ENCODE measurements at regions of chr12 and their contacts with region 1.

Region 1: DNA sequence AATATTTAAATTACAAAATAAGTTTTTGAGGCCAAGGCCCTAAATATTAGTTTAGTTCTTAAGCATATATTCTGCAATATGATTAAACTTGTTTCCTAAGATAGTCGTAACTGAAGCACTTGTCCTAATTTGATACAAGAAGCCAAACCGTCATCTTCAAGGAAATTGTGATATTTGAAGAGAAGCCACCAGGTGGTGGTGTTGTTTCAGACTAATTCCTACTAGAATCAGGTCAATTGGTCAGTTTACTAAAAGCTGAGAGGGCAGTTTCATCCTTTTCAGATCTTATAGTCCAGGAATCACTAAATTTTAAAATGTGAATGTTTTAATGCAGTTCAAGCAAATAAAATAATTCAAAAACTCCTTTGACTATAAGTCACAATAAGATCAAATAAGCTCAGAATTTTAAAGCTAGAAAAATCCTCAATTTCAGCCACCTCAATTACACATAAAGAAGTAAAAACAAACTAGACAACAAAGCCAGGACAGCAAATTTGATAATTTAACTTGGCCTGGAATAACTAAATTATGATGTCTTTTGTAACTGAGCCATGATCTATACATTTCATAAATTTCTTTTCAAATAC is 7.1 kb upstream of the ARL1 start:
- DNase-seq: peak; percentile 88
- ATAC-seq: peak; percentile 73
- H3K4me3 ChIP-seq: no peak overlapping the region
- H3K27ac ChIP-seq: no peak overlapping the region
- H3K4me1 ChIP-seq: peaks cover 4% of the 10 kb centered on the region; the same call in 1 of the 2 replicates
- H3K27me3 ChIP-seq: no peaks in the 10 kb centered on the region
- CTCF ChIP-seq: peak; percentile 88

Region 2: GRCh38 chr12:101570047-101570446 is 155.4 kb after region 1 on chr12:
- CTCF ChIA-PET with region 1: no interaction called
- POLR2A ChIA-PET with region 1: no interaction called
- intact Hi-C with region 1: loop called (anchors 1 kb)
- DNase-seq: peak; percentile 59
- ATAC-seq: peak; percentile 70
- H3K4me3 ChIP-seq: no peak overlapping the region
- H3K27ac ChIP-seq: no peak overlapping the region
- H3K4me1 ChIP-seq: no peaks in the 10 kb centered on the region
- H3K27me3 ChIP-seq: peaks cover 66% of the 10 kb centered on the region
- CTCF ChIP-seq: peak; percentile 69

Region 3: DNA sequence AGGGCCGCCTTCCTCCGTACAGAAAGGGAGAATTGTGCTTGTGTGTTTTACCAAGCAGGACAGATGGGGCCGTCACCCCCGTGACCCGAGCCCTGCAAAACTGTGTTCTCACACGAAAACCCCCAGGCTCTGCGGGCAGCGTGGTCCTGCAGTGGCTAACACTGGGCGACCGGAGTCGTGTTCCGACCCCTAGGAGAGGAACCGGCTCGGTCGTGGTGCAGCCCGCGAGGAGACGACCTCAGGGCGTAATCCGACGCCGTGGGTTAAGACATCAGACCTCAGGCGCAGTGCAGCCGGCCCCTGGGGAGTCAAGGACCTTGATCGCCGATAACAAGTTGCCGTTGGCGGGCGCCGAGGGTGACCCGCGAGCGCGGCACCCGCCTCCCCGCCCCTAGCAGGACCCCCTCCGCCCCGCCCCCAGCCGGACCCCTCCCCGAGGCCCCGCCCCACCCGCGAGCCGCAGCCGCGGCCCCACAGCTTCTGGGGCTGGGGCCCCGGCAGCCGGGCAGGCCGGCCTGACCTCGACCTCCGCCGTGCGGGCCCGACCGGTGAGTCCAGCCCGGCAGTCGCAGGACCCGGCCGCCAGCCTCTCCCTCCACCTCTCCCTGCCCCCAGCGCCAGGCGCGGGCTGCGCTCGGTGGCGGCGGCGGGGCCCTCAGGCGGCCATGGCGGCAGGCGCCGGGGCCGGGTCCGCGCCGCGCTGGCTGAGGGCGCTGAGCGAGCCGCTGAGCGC is 282.7 kb after region 1 on chr12 and contains the start of gene CHPT1:
- CTCF ChIA-PET with region 1: no interaction called
- POLR2A ChIA-PET with region 1: no interaction called
- intact Hi-C with region 1: loop called (anchors 2 kb)
- DNase-seq: peak; percentile 47
- ATAC-seq: peak; percentile 70
- H3K4me3 ChIP-seq: peak within 1 kb of the TSS; percentile 89
- H3K27ac ChIP-seq: no peak within 1 kb of the TSS
- H3K4me1 ChIP-seq: peaks cover 12% of the 10 kb centered on the region
- H3K27me3 ChIP-seq: no peaks in the 10 kb centered on the region
- CTCF ChIP-seq: no peak
- total RNA-seq, gene CHPT1: 55.3 and 56.2 TPM in 2 replicates

Region 4: GRCh38 chr12:101773650-101774162 is 359.1 kb after region 1 on chr12:
- CTCF ChIA-PET with region 1: no interaction called
- POLR2A ChIA-PET with region 1: no interaction called
- intact Hi-C with region 1: loop called (anchors 5 kb)
- DNase-seq: peak; percentile 81
- ATAC-seq: peak; percentile 84
- H3K4me3 ChIP-seq: no peak overlapping the region
- H3K27ac ChIP-seq: no peak overlapping the region
- H3K4me1 ChIP-seq: no peaks in the 10 kb centered on the region
- H3K27me3 ChIP-seq: no peaks in the 10 kb centered on the region
- CTCF ChIP-seq: peak; percentile 95

Region 5: GRCh38 chr12:101839324-101840283 is 425.0 kb after region 1 on chr12:
- CTCF ChIA-PET with region 1: no interaction called
- POLR2A ChIA-PET with region 1: no interaction called
- intact Hi-C with region 1: loop called (anchors 1 kb)
- DNase-seq: peak; percentile 85
- ATAC-seq: peak; percentile 90
- H3K4me3 ChIP-seq: peak overlapping the region; percentile 24; the same call in 1 of the 2 replicates
- H3K27ac ChIP-seq: no peak overlapping the region
- H3K4me1 ChIP-seq: peaks cover 8% of the 10 kb centered on the region; the same call in 1 of the 2 replicates
- H3K27me3 ChIP-seq: no peaks in the 10 kb centered on the region
- CTCF ChIP-seq: peak; percentile 93

Measured in PC-3 (cell line).